Activated naive CD4-positive, alpha-beta T cell treated with anti-CD3 and anti-CD28 coated beads for 36 hours (primary cell): ENCODE measurements at regions of chr10 and their contacts with region 1.

Region 1: DNA sequence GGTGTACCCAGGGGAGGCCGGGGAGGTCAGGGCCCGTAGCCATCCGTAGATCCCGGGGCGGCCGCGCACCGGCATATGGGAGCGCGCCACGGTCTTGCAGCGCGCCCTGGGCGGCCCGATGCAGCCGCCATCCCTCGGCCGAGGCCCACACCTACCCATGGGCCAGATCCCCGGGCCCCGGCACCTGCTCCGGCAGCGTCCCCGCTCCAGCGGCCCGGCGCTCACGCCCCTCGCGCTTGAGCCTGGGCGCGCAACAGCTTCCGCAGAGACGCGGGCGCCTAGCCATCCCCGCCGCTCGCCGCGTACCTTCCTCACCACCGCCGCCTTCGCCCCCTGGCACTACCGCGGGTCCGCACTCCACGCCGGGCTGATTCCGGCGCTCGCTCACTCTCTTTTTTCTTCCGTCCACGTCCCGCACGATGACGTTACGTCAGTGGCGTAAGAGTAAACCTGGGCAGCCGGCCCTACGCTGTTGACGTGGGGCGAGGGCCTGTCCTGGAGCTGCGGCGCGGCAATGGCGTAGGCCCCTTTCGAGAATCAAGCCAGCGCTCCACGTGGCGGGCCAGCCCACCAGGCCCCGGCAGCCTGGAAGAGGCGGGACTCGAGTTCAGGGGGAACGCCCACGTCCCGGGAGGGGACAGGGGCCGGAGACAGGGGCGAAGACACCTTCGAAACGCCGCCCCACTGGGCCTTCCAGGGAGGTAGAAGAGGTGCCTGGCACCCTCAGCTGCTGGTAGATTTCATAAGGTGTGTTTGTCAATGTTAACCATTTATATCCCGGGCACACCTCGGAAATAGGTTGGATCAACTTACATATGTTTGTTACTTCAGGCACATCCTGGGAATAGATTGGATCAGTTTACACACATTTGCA is at the start of gene ALDH18A1:
- DNase-seq: peak; percentile 85
- H3K4me3 Mint-ChIP-seq: peak within 1 kb of the TSS; percentile 99
- H3K27ac Mint-ChIP-seq: peak within 1 kb of the TSS; percentile 88
- H3K4me1 Mint-ChIP-seq: peaks cover 31% of the 10 kb centered on the region
- H3K27me3 Mint-ChIP-seq: no peaks in the 10 kb centered on the region
- total RNA-seq, gene ALDH18A1: 82.1 to 91.7 TPM

Region 2: DNA sequence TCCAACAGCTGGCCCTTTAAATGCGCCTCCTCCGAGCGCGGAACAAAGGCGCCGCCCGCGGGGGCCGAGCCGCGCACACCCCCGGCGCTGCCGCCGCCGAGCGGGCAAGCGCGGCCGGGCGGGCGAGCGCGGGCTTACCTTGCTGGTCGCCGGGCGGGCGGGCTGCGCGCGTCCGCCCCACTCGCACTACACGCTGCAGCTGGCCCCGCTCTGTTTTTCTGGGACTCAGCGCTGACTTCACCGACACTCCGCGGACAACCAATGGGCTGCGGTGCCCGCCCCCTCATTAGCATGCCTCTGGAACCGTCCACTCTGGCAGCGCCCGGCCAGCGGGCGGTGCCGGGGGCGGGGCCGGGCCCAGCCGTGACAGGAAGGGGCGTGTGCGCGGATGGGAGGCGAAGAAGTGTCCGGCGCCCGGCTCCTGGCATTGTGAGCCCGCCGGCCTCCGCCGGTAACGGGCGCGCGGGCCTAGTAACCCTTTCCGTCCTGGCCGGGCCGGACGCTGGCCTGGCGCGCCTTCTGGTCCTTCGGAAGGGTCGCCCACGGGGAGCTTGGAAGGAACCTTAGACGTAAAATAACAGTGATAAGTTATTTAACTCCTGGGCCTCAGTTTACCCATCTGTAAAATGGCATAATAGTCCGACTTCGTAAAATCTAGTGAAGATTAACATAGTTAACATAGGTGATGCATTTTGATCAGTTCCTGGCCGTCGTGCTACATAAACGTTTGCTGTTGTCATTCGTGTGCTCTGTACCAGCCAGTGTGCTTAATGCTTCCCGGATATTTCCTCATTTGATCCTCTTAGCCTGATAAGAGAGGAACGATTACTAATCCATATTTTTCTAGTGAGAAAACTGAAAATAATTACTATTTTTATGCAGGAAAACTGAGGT is 95.1 kb before region 1 on chr10 and contains the start of gene SORBS1:
- CTCF ChIA-PET with region 1: no interaction called
- intact Hi-C with region 1: loop called (anchors 1 kb)
- DNase-seq: peak; percentile 88
- H3K4me3 Mint-ChIP-seq: peak within 1 kb of the TSS; percentile 92
- H3K27ac Mint-ChIP-seq: no peak within 1 kb of the TSS
- H3K4me1 Mint-ChIP-seq: peaks cover 9% of the 10 kb centered on the region
- H3K27me3 Mint-ChIP-seq: peaks cover 14% of the 10 kb centered on the region
- total RNA-seq, gene SORBS1: 0.77 to 0.93 TPM

Region 3: GRCh38 chr10:95767884-95768556 is 111.5 kb after region 1 on chr10:
- CTCF ChIA-PET with region 1: no interaction called
- intact Hi-C with region 1: no loop called
- DNase-seq: no peak
- H3K4me3 Mint-ChIP-seq: no peak overlapping the region
- H3K27ac Mint-ChIP-seq: no peak overlapping the region
- H3K4me1 Mint-ChIP-seq: no peaks in the 10 kb centered on the region
- H3K27me3 Mint-ChIP-seq: no peaks in the 10 kb centered on the region

Region 4: DNA sequence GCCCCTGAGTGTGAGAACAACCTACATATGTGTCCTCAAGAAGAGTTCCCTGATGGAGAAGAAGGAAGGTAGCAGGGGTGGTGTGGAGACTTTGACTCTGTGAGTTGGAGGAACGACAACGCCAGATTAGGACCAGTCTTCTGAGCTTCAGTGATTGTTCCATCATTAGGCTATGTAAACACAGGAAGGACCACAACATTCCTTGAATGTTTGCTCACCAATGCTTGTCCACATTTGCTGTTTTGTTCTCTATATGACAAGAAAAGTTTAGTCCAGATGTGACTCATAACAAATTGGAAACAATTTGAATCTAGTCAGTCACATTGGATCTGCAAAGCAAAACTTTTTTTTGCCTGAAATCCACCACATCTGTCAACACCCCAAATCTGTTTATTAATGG is 162.1 kb after region 1 on chr10:
- CTCF ChIA-PET with region 1: no interaction called
- intact Hi-C with region 1: no loop called
- DNase-seq: no peak
- H3K4me3 Mint-ChIP-seq: no peak overlapping the region
- H3K27ac Mint-ChIP-seq: no peak overlapping the region
- H3K4me1 Mint-ChIP-seq: peaks cover 2% of the 10 kb centered on the region
- H3K27me3 Mint-ChIP-seq: peaks cover 22% of the 10 kb centered on the region